ENCODE measurements at regions of chr11 and their contacts with region 1.

Region 1: DNA sequence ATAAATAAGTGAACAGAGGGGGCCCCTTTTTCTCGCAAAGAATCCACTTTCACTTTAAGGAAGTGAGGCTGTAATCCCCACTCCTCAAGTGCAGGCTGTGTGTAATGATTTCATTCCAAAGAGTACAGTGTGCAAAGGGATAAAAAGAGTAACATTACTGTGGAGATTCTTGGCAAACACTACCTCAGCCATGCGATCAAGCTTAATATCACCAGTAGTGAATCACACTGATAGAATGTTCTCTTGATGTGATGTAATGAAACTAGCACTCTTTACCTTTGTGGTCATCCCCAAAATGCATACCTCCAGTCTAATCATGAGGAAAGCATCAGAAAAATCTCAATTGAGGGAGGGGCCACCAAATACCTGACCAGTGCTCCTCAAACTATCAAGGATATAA is 246.1 kb upstream of the CHORDC1 start:
- DNase-seq: no peak
- H3K4me3 ChIP-seq: no peak overlapping the region
- H3K27ac ChIP-seq: no peak overlapping the region
- H3K4me1 ChIP-seq: peaks cover 0 to 11% (median 0%) of the 10 kb centered on the region in 4 donors
- H3K27me3 ChIP-seq: no peaks in the 10 kb centered on the region
- CTCF ChIP-seq: no peak

Region 2: GRCh38 chr11:90294091-90294490 is 174.8 kb before region 1 on chr11:
- intact Hi-C with region 1: loop called (anchors 5 kb)
- DNase-seq: no peak
- H3K4me3 ChIP-seq: no peak overlapping the region
- H3K27ac ChIP-seq: no peak overlapping the region
- H3K4me1 ChIP-seq: no peaks in the 10 kb centered on the region
- H3K27me3 ChIP-seq: no peaks in the 10 kb centered on the region
- CTCF ChIP-seq: no peak